Naive thymus-derived CD4-positive, alpha-beta T cell (primary cell): ENCODE measurements at regions of chr6 and their contacts with region 1.

Region 1: GRCh38 chr6:147279427-147279826 is 75.2 kb downstream of the STXBP5 start:
- DNase-seq: no peak
- ATAC-seq: no peak
- H3K4me3 ChIP-seq: no peak overlapping the region
- H3K4me3 Mint-ChIP-seq: peak overlapping the region in 4 of 10 donors; percentile 8 to 57 (median 40)
- H3K27ac ChIP-seq: no peak overlapping the region
- H3K27ac Mint-ChIP-seq: peak overlapping the region in 7 of 9 donors; percentile 30 to 81 (median 74)
- H3K4me1 ChIP-seq: no peaks in the 10 kb centered on the region
- H3K4me1 Mint-ChIP-seq: peaks cover 5 to 35% (median 28%) of the 10 kb centered on the region in 7 donors
- H3K27me3 ChIP-seq: no peaks in the 10 kb centered on the region
- H3K27me3 Mint-ChIP-seq: no peaks in the 10 kb centered on the region

Region 2: DNA sequence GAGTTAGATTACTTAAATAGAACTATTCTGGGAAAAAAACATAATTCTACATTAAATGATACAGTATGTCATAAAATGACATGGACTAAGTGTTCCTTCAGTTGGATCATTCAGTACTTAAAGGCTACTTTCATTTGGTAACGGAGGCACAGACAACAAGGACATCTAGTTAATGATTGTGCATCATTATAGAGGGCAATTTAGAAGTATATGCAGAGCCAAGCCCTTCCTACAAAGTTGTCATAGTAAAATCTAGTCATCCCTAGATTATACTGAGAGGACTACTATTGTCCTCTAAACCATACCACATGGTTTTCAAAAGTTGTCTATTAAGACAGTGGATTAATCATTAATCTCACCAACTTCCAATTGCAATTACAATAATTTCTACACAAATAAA is 129.1 kb before region 1 on chr6:
- CTCF ChIA-PET with region 1: no interaction called
- POLR2A ChIA-PET with region 1: no interaction called
- intact Hi-C with region 1: no loop called
- DNase-seq: no peak
- ATAC-seq: no peak
- H3K4me3 ChIP-seq: no peak overlapping the region
- H3K4me3 Mint-ChIP-seq: no peak overlapping the region
- H3K27ac ChIP-seq: no peak overlapping the region
- H3K27ac Mint-ChIP-seq: no peak overlapping the region
- H3K4me1 ChIP-seq: no peaks in the 10 kb centered on the region
- H3K4me1 Mint-ChIP-seq: peaks cover 0 to 9% (median 0%) of the 10 kb centered on the region in 7 donors
- H3K27me3 ChIP-seq: no peaks in the 10 kb centered on the region
- H3K27me3 Mint-ChIP-seq: peaks cover 0 to 8% (median 0%) of the 10 kb centered on the region in 5 donors

Region 3: DNA sequence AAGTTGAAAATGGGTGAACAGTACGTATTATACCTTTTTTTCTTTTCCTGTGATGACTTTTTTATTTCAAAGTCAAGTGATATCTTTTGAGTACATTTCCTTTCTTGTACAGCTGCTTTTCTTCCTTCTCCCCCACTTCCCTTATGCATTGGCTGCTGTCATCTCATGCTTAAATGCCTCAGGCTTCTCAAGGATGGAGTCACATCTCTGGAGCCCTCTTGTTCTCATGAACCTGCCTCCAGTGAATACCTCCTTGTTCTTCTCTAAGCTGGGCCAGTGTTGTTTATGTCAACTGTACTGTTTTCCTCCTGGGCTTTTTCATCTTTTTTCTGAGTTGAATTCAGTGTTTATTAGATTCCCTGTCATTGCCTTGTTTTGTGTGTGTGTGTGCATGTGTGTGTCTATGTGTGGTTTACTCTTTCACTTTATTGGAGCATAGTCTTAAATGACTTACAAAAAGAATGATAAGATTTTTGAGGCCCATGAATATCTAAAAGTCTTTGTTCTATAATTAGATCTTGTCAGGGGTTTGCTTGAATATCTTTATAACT is 51.6 kb before region 1 on chr6:
- CTCF ChIA-PET with region 1: no interaction called
- POLR2A ChIA-PET with region 1: no interaction called
- intact Hi-C with region 1: no loop called
- DNase-seq: peak in 3 of 9 donors; percentile 7 to 9 (median 9)
- ATAC-seq: no peak
- H3K4me3 ChIP-seq: no peak overlapping the region
- H3K4me3 Mint-ChIP-seq: peak overlapping the region in 6 of 10 donors; percentile 3 to 48 (median 46)
- H3K27ac ChIP-seq: no peak overlapping the region
- H3K27ac Mint-ChIP-seq: peak overlapping the region in 8 of 9 donors; percentile 1 to 69 (median 30)
- H3K4me1 ChIP-seq: peaks cover 0 to 4% of the 10 kb centered on the region in 2 donors
- H3K4me1 Mint-ChIP-seq: peaks cover 11 to 54% (median 49%) of the 10 kb centered on the region in 7 donors
- H3K27me3 ChIP-seq: no peaks in the 10 kb centered on the region
- H3K27me3 Mint-ChIP-seq: no peaks in the 10 kb centered on the region

Region 4: DNA sequence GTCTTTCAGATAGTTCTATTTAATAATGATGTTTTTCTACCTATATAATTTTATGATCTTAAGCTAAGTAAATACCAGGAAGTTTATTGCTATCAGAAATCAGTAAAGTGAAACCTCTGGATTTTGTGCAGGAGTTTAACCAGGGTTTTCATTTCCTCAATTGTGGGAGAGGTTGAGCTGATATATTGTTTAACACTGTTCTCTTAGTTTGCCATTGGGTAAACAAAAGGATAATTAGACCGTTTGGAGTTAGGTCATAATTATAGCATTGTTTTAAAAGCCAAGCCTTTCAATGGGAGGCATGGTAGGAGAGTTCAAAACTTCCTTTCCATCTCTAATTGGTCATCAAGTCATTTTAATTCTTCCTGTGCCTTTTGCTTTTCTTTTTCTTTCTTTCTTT is 16.5 kb before region 1 on chr6:
- CTCF ChIA-PET with region 1: no interaction called
- POLR2A ChIA-PET with region 1: no interaction called
- intact Hi-C with region 1: loop called in 1 of 2 experiments (anchors 2 kb)
- DNase-seq: no peak
- ATAC-seq: no peak
- H3K4me3 ChIP-seq: no peak overlapping the region
- H3K4me3 Mint-ChIP-seq: no peak overlapping the region
- H3K27ac ChIP-seq: no peak overlapping the region
- H3K27ac Mint-ChIP-seq: no peak overlapping the region
- H3K4me1 ChIP-seq: no peaks in the 10 kb centered on the region
- H3K4me1 Mint-ChIP-seq: peaks cover 0 to 5% (median 3%) of the 10 kb centered on the region in 7 donors
- H3K27me3 ChIP-seq: no peaks in the 10 kb centered on the region
- H3K27me3 Mint-ChIP-seq: no peaks in the 10 kb centered on the region

Region 5: DNA sequence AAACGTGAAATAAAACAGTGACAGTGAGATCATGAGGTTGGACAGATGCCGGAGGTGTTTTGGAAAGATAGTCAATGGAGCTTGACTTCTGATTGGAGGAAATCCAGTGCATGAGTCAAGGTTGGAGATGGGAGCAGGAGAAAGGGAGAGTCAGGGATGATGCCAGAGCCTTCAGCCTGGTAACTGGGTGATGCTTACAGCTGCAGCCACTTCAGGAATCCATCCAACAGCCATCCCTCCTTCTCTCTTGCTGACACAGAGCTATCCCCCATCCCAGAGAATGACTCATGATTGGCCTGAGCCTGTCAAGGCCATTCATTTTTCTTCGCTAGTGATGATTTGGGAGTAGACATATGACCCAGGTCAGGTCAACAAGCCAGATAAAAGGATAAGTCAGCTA is 341.8 kb after region 1 on chr6:
- CTCF ChIA-PET with region 1: no interaction called
- POLR2A ChIA-PET with region 1: no interaction called
- intact Hi-C with region 1: no loop called
- DNase-seq: no peak
- ATAC-seq: no peak
- H3K4me3 ChIP-seq: no peak overlapping the region
- H3K4me3 Mint-ChIP-seq: no peak overlapping the region
- H3K27ac ChIP-seq: no peak overlapping the region
- H3K27ac Mint-ChIP-seq: no peak overlapping the region
- H3K4me1 ChIP-seq: no peaks in the 10 kb centered on the region
- H3K4me1 Mint-ChIP-seq: no peaks in the 10 kb centered on the region
- H3K27me3 ChIP-seq: no peaks in the 10 kb centered on the region
- H3K27me3 Mint-ChIP-seq: peaks cover 0 to 6% (median 0%) of the 10 kb centered on the region in 5 donors